A673 (cell line): ENCODE measurements at regions of chr1 and their contacts with region 1.

Region 1: GRCh38 chr1:174883409-174883808 is 116.3 kb upstream of the CACYBP start:
- DNase-seq: peak; percentile 64
- H3K4me3 ChIP-seq: no peak overlapping the region
- H3K27ac ChIP-seq: no peak overlapping the region
- H3K4me1 ChIP-seq: peaks cover 15% of the 10 kb centered on the region
- H3K27me3 ChIP-seq: no peaks in the 10 kb centered on the region
- CTCF ChIP-seq: peak; percentile 57

Region 2: DNA sequence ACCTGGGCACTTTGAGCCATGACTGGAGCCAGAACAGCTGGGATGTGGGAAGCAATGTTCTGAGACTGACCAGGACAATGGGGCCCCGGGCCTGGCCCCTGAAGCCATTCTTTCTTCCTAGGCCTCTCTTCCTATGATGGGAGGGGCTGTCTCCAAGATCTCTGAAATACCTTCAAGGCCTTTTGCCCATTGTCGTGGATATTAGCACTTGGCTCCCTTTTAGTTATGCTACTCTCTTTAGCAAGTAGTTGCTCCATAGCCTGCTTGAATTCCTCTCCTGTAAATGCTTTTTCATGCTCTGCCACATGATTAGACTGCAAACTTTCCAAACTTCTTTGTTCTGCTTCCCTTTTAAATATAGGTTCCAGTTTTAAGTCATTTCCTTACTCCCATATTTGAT is 146.6 kb before region 1 on chr1:
- CTCF ChIA-PET with region 1: no interaction called
- POLR2A ChIA-PET with region 1: no interaction called
- intact Hi-C with region 1: no loop called
- DNase-seq: no peak
- H3K4me3 ChIP-seq: no peak overlapping the region
- H3K27ac ChIP-seq: no peak overlapping the region
- H3K4me1 ChIP-seq: no peaks in the 10 kb centered on the region
- H3K27me3 ChIP-seq: no peaks in the 10 kb centered on the region
- CTCF ChIP-seq: no peak

Region 3: DNA sequence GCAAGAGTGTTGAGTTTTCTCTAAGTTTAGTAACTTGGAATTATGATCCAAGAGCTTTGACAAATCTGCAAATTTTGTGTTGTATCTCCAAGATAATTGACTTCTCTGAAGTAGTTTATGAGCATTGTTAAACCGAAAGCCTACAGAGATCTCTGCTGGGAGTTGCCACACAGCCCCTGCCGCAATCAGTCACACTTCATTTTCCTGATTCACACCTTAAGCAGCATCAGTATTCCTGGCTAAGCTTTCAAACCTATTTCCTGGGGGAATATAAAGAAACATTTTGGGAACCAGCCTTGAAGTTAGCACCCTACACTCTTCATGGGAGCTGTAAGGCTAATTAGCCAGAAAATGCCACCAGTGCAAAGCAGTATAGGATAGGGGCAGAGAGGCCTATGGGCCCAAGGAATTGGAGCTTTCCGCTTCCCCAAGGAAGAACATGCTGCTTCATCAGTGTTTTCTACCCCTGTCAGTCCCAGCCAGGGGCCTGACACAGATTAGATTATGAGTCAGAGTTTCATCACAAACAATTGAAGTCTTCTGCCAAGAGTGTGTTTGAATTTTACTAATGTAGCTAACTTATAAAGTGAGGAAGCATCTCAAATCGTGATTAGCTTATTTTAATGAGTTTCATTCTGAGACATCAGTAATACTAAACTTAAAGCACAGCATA is 93.2 kb after region 1 on chr1:
- CTCF ChIA-PET with region 1: no interaction called
- POLR2A ChIA-PET with region 1: interaction called, 20 read pairs
- intact Hi-C with region 1: loop called (anchors 5 kb)
- DNase-seq: peak; percentile 46
- H3K4me3 ChIP-seq: no peak overlapping the region
- H3K27ac ChIP-seq: no peak overlapping the region
- H3K4me1 ChIP-seq: no peaks in the 10 kb centered on the region
- H3K27me3 ChIP-seq: no peaks in the 10 kb centered on the region
- CTCF ChIP-seq: no peak

Region 4: DNA sequence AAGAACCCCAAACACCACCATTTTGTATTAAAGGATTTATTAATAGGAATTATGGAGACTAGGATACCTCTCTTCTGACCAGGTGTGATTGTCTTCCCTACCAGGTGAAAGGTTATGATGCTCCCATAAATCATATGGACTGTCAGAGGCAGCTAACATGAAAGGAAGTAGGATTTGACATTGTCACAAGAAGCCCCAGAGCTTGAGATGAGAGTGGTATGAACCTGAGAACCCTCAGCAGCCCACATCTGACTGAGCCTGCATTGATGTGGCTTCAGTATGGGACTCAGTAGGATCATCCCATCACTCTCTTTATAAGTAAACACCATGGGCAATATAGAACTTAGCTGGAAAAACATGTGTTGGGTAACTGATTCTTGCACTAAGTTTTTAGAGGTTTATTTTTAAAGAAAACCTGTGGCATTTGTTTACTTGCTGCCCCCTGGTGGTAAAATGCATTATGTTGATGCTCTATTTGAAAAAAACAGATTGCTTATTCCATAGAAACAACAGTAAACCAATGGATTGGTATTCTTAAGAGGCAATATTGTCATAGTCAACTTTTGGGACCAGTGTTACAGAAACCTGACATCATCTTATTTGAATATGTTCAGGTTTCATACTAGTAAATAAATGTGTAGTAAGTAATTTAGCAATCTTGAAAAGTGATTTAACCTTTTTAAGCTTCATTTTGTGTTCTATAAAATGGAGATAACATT is 99.7 kb after region 1 on chr1:
- CTCF ChIA-PET with region 1: no interaction called
- POLR2A ChIA-PET with region 1: interaction called, 20 read pairs
- intact Hi-C with region 1: loop called (anchors 5 kb)
- DNase-seq: peak; percentile 64
- H3K4me3 ChIP-seq: no peak overlapping the region
- H3K27ac ChIP-seq: no peak overlapping the region
- H3K4me1 ChIP-seq: no peaks in the 10 kb centered on the region
- H3K27me3 ChIP-seq: no peaks in the 10 kb centered on the region
- CTCF ChIP-seq: peak; percentile 74

Region 5: GRCh38 chr1:174999216-174999925 is 116.0 kb after region 1 on chr1:
- CTCF ChIA-PET with region 1: interaction called, 3 read pairs
- POLR2A ChIA-PET with region 1: no interaction called
- intact Hi-C with region 1: loop called (anchors 2 kb)
- DNase-seq: peak; percentile 99
- H3K4me3 ChIP-seq: peak overlapping the region; percentile 92
- H3K27ac ChIP-seq: peak overlapping the region; percentile 100
- H3K4me1 ChIP-seq: peaks cover 10% of the 10 kb centered on the region
- H3K27me3 ChIP-seq: no peaks in the 10 kb centered on the region
- CTCF ChIP-seq: no peak